Ovary (tissue), 10 donors: ENCODE measurements at regions of chr18 and their contacts with region 1.

Region 1: DNA sequence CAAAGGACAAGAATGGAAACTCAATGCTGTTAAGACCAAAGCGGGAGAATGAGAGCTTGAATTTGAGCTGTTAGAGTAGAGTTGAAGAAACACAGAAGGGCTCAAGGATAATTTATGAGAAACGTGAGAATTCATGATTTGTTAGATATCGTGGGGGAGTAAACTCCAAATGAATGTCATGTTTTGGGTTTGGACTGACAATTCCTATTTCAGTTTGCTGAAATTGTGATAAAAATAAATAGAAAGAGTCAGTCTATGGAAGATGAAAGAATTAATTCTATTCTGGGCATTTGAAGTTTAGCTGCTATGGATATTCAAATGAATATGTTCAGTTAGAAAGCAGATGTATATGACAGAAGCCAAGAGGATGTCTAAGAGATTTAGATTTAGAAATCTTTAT is 723.4 kb upstream of the PIK3C3 start:
- DNase-seq: no peak
- H3K4me3 ChIP-seq: no peak overlapping the region
- H3K27ac ChIP-seq: no peak overlapping the region
- H3K4me1 ChIP-seq: no peaks in the 10 kb centered on the region
- H3K27me3 ChIP-seq: no peaks in the 10 kb centered on the region
- CTCF ChIP-seq: no peak
- EP300 ChIP-seq: no peak
- POLR2A ChIP-seq: no peak

Region 2: GRCh38 chr18:40296717-40297413 is 934.8 kb before region 1 on chr18:
- intact Hi-C with region 1: loop called in 1 of 4 experiments (anchors 5 kb)
- DNase-seq: no peak
- H3K4me3 ChIP-seq: no peak overlapping the region
- H3K27ac ChIP-seq: no peak overlapping the region
- H3K4me1 ChIP-seq: no peaks in the 10 kb centered on the region
- H3K27me3 ChIP-seq: no peaks in the 10 kb centered on the region
- CTCF ChIP-seq: no peak
- EP300 ChIP-seq: no peak
- POLR2A ChIP-seq: no peak

Region 3: DNA sequence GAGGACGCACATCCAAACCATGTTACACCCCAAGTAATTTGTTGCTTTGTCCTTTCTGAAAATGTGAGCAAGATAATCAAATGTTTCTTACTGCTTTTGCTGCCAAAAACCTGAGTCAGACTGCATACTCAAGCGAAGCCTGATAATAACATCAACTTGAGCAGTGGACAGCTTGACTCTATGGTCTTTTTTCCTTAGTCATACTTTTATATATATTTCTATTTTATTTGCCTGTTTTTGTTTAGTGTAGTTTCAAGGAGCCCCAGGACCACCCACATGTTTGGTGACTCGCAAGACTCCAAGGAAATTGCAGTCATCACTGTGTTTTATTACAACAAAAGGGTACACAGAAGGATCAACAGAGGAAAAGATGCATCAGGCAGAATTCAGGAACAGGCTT is 34.9 kb after region 1 on chr18:
- intact Hi-C with region 1: no loop called
- DNase-seq: no peak
- H3K4me3 ChIP-seq: no peak overlapping the region
- H3K27ac ChIP-seq: no peak overlapping the region
- H3K4me1 ChIP-seq: no peaks in the 10 kb centered on the region
- H3K27me3 ChIP-seq: no peaks in the 10 kb centered on the region
- CTCF ChIP-seq: no peak
- EP300 ChIP-seq: no peak
- POLR2A ChIP-seq: no peak